Activated CD8-positive, alpha-beta memory T cell treated with anti-CD3 and anti-CD28 coated beads, Interleukin-2, amount 10 ng/mL, durations not matched to agents 7 days and 5 days (primary cell): ENCODE measurements at regions of chr3 and their contacts with region 1.

Region 1: GRCh38 chr3:42552830-42553229 is 28.9 kb downstream of the SEC22C start:
- DNase-seq: no peak
- ATAC-seq: no peak
- H3K4me3 Mint-ChIP-seq: no peak overlapping the region
- H3K27ac Mint-ChIP-seq: no peak overlapping the region
- H3K4me1 Mint-ChIP-seq: peaks cover 27% of the 10 kb centered on the region
- H3K27me3 Mint-ChIP-seq: no peaks in the 10 kb centered on the region

Region 2: DNA sequence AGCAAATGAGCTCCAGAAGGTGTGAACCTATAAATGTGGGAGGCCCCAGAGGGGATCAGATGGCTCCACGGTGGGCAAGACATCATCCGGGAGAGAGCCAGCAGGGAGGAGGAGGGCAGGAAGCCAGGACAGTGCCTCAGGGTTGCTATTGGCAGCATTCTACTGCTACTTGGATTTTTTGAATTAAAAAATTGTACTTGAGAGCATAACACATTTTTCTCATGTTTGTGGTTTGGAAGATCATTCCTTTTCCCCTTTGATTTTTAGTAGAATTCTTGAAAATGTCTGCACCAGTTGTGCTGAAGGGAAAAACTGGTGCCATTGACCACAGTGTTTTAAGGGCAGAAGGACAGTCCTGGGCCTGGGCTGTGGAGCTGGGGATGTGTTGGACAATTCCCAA is 201.6 kb before region 1 on chr3:
- CTCF ChIA-PET with region 1: no interaction called
- DNase-seq: no peak
- ATAC-seq: no peak
- H3K4me3 Mint-ChIP-seq: no peak overlapping the region
- H3K27ac Mint-ChIP-seq: no peak overlapping the region
- H3K4me1 Mint-ChIP-seq: peaks cover under 1% of the 10 kb centered on the region
- H3K27me3 Mint-ChIP-seq: peaks cover 3% of the 10 kb centered on the region

Region 3: GRCh38 chr3:42459151-42459550 is 93.7 kb before region 1 on chr3:
- CTCF ChIA-PET with region 1: no interaction called
- DNase-seq: no peak
- ATAC-seq: no peak
- H3K4me3 Mint-ChIP-seq: no peak overlapping the region
- H3K27ac Mint-ChIP-seq: no peak overlapping the region
- H3K4me1 Mint-ChIP-seq: no peaks in the 10 kb centered on the region
- H3K27me3 Mint-ChIP-seq: peaks cover 24% of the 10 kb centered on the region

Region 4: DNA sequence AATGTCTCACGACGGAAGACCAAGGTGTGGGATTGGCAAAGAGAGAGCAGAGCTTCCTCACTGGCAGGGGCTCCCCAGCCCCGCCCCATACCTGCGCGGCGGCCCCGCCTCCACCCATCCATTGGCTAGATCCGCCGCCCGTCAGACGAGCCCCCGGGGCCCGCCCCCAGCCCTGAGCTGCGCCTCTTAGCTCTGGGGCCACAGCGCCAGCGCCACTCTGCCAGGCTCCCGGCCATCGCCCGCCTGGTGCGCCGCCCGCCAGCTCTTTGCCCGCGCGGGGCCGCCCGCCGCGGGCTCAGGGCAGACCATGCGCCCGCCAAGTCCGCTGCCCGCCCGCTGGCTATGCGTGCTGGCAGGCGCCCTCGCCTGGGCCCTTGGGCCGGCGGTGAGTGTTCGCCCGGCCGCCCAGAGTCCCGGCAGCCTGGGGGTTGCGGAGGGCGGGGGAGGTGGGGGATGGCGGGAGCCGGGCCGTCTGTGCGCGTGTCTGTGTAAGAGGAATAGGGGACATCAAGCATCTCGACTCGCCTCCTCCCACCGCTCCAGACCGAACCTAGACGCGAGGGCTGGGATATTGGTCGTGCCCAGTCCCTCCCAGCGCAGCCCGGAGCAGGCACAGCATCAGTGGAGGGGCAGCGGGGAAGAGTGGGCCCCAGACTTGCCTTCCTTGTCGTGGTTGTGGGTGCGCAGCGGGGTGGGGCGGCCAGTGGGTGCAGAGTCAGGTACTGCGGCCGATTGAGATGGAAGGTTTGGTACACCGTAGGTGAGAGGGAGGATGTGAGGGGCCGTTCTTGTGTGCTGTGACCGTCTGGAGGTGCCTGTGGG is 50.2 kb before region 1 on chr3 and contains the start of gene VIPR1:
- CTCF ChIA-PET with region 1: interaction called, 39 read pairs
- DNase-seq: peak; percentile 87
- ATAC-seq: peak; percentile 95
- H3K4me3 Mint-ChIP-seq: peak within 1 kb of the TSS; percentile 81
- H3K27ac Mint-ChIP-seq: no peak within 1 kb of the TSS
- H3K4me1 Mint-ChIP-seq: peaks cover 33% of the 10 kb centered on the region
- H3K27me3 Mint-ChIP-seq: peaks cover 44% of the 10 kb centered on the region
- total RNA-seq, gene VIPR1: 0.14 to 1.9 TPM